Pancreas (tissue), 10 donors: ENCODE measurements at regions of chr18 and their contacts with region 1.

Region 1: DNA sequence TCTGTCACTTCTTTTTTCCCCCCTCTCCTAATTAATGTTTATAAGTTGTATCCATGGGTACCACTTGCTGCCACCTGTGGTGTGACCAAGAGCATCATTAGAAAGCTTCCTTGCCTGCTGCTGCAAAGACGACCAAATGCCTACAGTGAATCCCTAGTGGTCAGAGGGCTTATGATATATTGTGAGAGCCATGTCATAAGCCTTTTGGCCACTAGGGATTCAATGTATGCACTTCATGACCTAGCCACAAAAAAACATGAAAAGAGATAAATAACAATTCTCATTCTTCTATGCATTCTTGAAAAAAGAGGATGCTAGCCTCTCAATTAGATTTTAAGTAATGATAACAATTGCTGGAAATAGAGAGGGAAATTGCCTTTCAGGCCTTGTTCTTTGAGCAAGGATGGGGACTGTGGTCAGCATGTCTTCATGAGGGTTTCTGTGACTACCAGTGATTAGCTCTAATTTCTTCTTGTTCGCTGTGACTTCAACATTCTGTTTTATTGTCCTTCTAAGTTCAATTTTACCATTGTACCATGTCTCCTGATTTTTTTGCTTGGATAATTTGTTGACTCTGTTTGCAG is 435.3 kb downstream of the TGIF1 start:
- DNase-seq: no peak
- ATAC-seq: no peak
- H3K4me3 ChIP-seq: no peak overlapping the region
- H3K27ac ChIP-seq: no peak overlapping the region
- H3K4me1 ChIP-seq: no peaks in the 10 kb centered on the region
- H3K27me3 ChIP-seq: no peaks in the 10 kb centered on the region
- CTCF ChIP-seq: peak in 1 of 4 donors; percentile 19

Region 2: GRCh38 chr18:3481696-3482210 is 403.5 kb before region 1 on chr18:
- intact Hi-C with region 1: loop called in 1 of 3 experiments (anchors 10 kb)
- DNase-seq: peak in 1 of 6 donors; percentile 19
- ATAC-seq: peak in 3 of 4 donors; percentile 66 to 74 (median 69)
- H3K4me3 ChIP-seq: no peak overlapping the region
- H3K27ac ChIP-seq: no peak overlapping the region
- H3K4me1 ChIP-seq: no peaks in the 10 kb centered on the region
- H3K27me3 ChIP-seq: no peaks in the 10 kb centered on the region
- CTCF ChIP-seq: peak in 2 of 4 donors; percentile 17 to 33

Region 3: DNA sequence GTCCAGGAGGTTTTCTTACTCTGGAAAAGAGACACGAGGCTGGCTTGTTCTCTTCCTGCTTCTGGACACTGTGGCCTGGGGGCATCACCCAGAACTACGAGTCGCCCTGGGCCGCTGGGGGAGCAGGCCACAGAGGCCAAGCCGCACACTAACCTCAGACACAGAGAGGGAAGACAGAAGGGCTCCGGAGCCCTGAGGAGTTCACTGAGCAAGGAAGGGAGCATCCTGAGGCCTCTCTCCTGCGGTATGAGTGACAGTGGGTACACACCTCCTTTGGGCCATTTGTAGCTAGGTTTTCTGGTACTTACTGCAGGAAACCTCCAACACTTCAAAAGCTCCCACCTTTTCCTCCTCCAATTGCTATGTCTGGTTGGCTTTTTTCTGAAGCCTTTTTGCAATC is 75.7 kb after region 1 on chr18:
- intact Hi-C with region 1: no loop called
- DNase-seq: no peak
- ATAC-seq: no peak
- H3K4me3 ChIP-seq: no peak overlapping the region
- H3K27ac ChIP-seq: no peak overlapping the region
- H3K4me1 ChIP-seq: no peaks in the 10 kb centered on the region
- H3K27me3 ChIP-seq: no peaks in the 10 kb centered on the region
- CTCF ChIP-seq: no peak

Region 4: GRCh38 chr18:5049126-5049525 is 1163.8 kb after region 1 on chr18:
- intact Hi-C with region 1: no loop called
- DNase-seq: no peak
- ATAC-seq: no peak
- H3K4me3 ChIP-seq: no peak overlapping the region
- H3K27ac ChIP-seq: no peak overlapping the region
- H3K4me1 ChIP-seq: no peaks in the 10 kb centered on the region
- H3K27me3 ChIP-seq: peaks cover 0 to 3% (median 0%) of the 10 kb centered on the region in 4 donors
- CTCF ChIP-seq: no peak